GM12878 (cell line): ENCODE measurements at regions of chr1 and their contacts with region 1.

Region 1: DNA sequence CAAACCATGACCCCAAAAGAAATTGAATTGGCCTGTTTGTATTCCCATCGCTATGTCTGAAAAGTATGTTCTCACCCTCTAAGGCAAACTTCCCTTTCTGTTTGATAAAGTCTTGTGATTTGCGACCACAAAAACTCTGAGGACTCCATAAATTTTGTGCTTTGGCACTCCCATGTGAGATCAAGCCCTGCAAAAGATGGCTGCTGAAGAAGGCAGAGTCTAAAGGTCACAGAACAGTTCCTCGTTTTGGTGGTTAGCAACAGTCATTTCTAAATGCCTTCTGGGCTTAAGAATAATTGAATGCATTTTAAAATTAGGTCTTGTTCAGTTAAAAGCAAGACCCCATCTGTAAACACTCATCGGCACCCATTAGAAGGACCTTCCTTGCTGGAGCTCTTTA is 441.6 kb downstream of the OMA1 start:
- DNase-seq: peak; percentile 68
- ATAC-seq: peak; percentile 80
- H3K4me3 ChIP-seq: no peak overlapping the region
- H3K27ac ChIP-seq: no peak overlapping the region
- H3K4me1 ChIP-seq: peaks cover 21% of the 10 kb centered on the region
- H3K27me3 ChIP-seq: no peaks in the 10 kb centered on the region
- CTCF ChIP-seq: no peak
- EP300 ChIP-seq: peak; percentile 90 to 97
- POLR2A ChIP-seq: no peak
- RAD21 ChIP-seq: no peak

Region 2: DNA sequence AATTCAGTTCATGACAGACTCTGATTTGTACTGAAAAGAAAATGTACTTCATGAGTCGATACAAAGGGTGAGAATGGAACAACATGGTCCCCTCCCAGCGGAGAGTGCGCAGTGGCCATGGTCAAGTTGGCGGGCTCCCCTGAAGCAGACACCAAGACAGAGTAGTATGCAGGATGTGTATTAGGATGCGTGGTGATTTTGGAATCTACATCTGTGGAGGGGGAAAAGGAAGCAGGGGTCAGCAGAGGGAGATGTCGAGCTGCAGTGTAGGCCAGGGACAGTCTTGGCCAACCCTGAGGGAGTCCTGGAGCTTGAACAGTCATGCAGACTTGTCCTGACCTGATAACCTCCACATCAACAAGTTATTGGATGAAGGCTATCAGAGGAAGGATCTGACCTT is 39.4 kb before region 1 on chr1:
- CTCF ChIA-PET with region 1: interaction called, 8 read pairs
- POLR2A ChIA-PET with region 1: interaction called, 3 read pairs
- RAD21 ChIA-PET with region 1: interaction called, 11 read pairs
- SMC1A ChIA-PET with region 1: interaction called, 12 read pairs
- in situ Hi-C with region 1: no loop called
- intact Hi-C with region 1: no loop called
- DNase-seq: no peak
- ATAC-seq: peak; percentile 76
- H3K4me3 ChIP-seq: no peak overlapping the region
- H3K27ac ChIP-seq: no peak overlapping the region
- H3K4me1 ChIP-seq: no peaks in the 10 kb centered on the region
- H3K27me3 ChIP-seq: peaks cover 0 to 3% of the 10 kb centered on the region in 2 experiments; a peak in 2 of 4 replicates
- CTCF ChIP-seq: peak; percentile 32 to 54 (median 37); a peak in 4 of 6 replicates
- EP300 ChIP-seq: no peak
- POLR2A ChIP-seq: no peak
- RAD21 ChIP-seq: peak; percentile 65

Region 3: GRCh38 chr1:58119971-58120370 is 15.0 kb after region 1 on chr1:
- CTCF ChIA-PET with region 1: interaction called, 23 read pairs
- POLR2A ChIA-PET with region 1: interaction called, 5 read pairs
- RAD21 ChIA-PET with region 1: interaction called, 6 read pairs
- SMC1A ChIA-PET with region 1: interaction called, 28 read pairs
- in situ Hi-C with region 1: no loop called
- intact Hi-C with region 1: no loop called
- DNase-seq: no peak
- ATAC-seq: no peak
- H3K4me3 ChIP-seq: no peak overlapping the region
- H3K27ac ChIP-seq: no peak overlapping the region
- H3K4me1 ChIP-seq: no peaks in the 10 kb centered on the region
- H3K27me3 ChIP-seq: no peaks in the 10 kb centered on the region
- CTCF ChIP-seq: no peak
- EP300 ChIP-seq: no peak
- POLR2A ChIP-seq: no peak
- RAD21 ChIP-seq: no peak